B cell (primary cell): ENCODE measurements at regions of chr16 and their contacts with region 1.

Region 1: GRCh38 chr16:21708533-21709115 is 44.9 kb downstream of the OTOA start:
- DNase-seq: peak; percentile 87
- ATAC-seq: peak; percentile 47
- H3K4me3 ChIP-seq: no peak overlapping the region
- H3K4me3 Mint-ChIP-seq: no peak overlapping the region
- H3K27ac ChIP-seq: no peak overlapping the region
- H3K27ac Mint-ChIP-seq: no peak overlapping the region
- H3K4me1 ChIP-seq: peaks cover 7 to 15% of the 10 kb centered on the region in 2 donors
- H3K4me1 Mint-ChIP-seq: peaks cover 9% of the 10 kb centered on the region
- H3K27me3 ChIP-seq: peaks cover 0 to 11% (median 5%) of the 10 kb centered on the region in 4 experiments
- H3K27me3 Mint-ChIP-seq: peaks cover 10% of the 10 kb centered on the region
- CTCF ChIP-seq: peak; percentile 91

Region 2: GRCh38 chr16:21584817-21585216 is 123.8 kb before region 1 on chr16:
- CTCF ChIA-PET with region 1: interaction called, 129 read pairs
- POLR2A ChIA-PET with region 1: interaction called, 3 read pairs
- intact Hi-C with region 1: no loop called
- DNase-seq: no peak
- ATAC-seq: no peak
- H3K4me3 ChIP-seq: no peak overlapping the region
- H3K4me3 Mint-ChIP-seq: no peak overlapping the region
- H3K27ac ChIP-seq: no peak overlapping the region
- H3K27ac Mint-ChIP-seq: no peak overlapping the region
- H3K4me1 ChIP-seq: peaks cover 0 to 9% of the 10 kb centered on the region in 2 donors
- H3K4me1 Mint-ChIP-seq: peaks cover 6% of the 10 kb centered on the region
- H3K27me3 ChIP-seq: no peaks in the 10 kb centered on the region
- H3K27me3 Mint-ChIP-seq: no peaks in the 10 kb centered on the region
- CTCF ChIP-seq: no peak

Region 3: GRCh38 chr16:21599233-21600030 is 109.2 kb before region 1 on chr16 and contains the start of gene METTL9:
- CTCF ChIA-PET with region 1: interaction called, 11 read pairs
- POLR2A ChIA-PET with region 1: interaction called, 4 read pairs
- intact Hi-C with region 1: loop called (anchors 1 kb)
- DNase-seq: peak; percentile 97
- ATAC-seq: peak; percentile 89
- H3K4me3 ChIP-seq: peak within 1 kb of the TSS; percentile 70 to 95 (median 82)
- H3K4me3 Mint-ChIP-seq: peak within 1 kb of the TSS; percentile 88
- H3K27ac ChIP-seq: peak within 1 kb of the TSS; percentile 83 to 91
- H3K27ac Mint-ChIP-seq: peak within 1 kb of the TSS; percentile 94
- H3K4me1 ChIP-seq: peaks cover 13 to 17% of the 10 kb centered on the region in 2 donors
- H3K4me1 Mint-ChIP-seq: peaks cover 35% of the 10 kb centered on the region
- H3K27me3 ChIP-seq: no peaks in the 10 kb centered on the region
- H3K27me3 Mint-ChIP-seq: no peaks in the 10 kb centered on the region
- CTCF ChIP-seq: no peak
- total RNA-seq, gene METTL9: 57.3 and 57.7 TPM in 2 replicates

Region 4: DNA sequence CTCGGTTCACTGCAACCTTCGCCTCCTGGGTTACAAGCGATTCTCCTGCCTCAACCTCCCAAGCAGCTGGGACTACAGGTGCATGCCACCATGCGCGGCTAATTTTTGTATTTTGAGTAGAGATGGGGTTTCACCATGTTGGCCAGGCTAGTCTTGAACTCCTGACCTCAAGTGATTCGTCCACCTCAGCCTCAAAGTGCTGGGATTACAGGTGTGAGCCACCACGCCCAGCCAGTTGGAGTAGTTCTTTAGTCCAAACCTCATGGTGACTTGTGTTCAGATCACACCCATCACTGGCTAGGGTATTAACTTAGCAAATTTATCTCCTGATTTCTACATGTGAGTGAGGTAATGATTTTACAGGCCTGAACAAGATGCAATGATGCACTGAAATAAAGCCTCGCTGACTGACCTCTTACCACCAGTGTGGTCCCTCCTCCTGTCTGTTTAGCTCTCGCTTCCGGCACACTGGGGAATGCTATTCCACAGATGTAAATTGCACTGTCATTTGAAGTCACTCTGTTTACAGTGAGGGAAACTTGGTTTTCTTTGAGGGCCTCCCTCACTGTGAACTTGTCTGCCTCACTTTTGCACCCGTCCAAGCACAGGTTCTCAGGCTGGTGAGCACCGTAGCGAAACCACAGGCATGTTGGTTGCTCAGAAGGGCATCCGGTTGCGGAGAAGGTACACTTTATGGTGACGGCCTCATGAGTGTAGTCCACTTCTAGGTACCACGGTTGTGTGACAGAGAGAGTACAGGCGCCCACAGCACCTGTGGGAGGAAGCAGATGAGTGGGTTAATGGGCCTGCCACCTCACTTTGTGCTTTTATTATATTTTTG is 61.7 kb before region 1 on chr16:
- CTCF ChIA-PET with region 1: interaction called, 52 read pairs
- POLR2A ChIA-PET with region 1: no interaction called
- intact Hi-C with region 1: loop called (anchors 2 kb)
- DNase-seq: peak; percentile 77
- ATAC-seq: peak; percentile 86
- H3K4me3 ChIP-seq: peak overlapping the region in 2 of 5 experiments; percentile 2 to 8
- H3K4me3 Mint-ChIP-seq: peak overlapping the region; percentile 73
- H3K27ac ChIP-seq: peak overlapping the region; percentile 83 to 92
- H3K27ac Mint-ChIP-seq: peak overlapping the region; percentile 89
- H3K4me1 ChIP-seq: peaks cover 76 to 79% of the 10 kb centered on the region in 2 donors
- H3K4me1 Mint-ChIP-seq: peaks cover 69% of the 10 kb centered on the region
- H3K27me3 ChIP-seq: no peaks in the 10 kb centered on the region
- H3K27me3 Mint-ChIP-seq: no peaks in the 10 kb centered on the region
- CTCF ChIP-seq: no peak

Region 5: GRCh38 chr16:21673469-21673868 is 35.2 kb before region 1 on chr16:
- CTCF ChIA-PET with region 1: no interaction called
- POLR2A ChIA-PET with region 1: no interaction called
- intact Hi-C with region 1: no loop called
- DNase-seq: no peak
- ATAC-seq: no peak
- H3K4me3 ChIP-seq: no peak overlapping the region
- H3K4me3 Mint-ChIP-seq: no peak overlapping the region
- H3K27ac ChIP-seq: no peak overlapping the region
- H3K27ac Mint-ChIP-seq: no peak overlapping the region
- H3K4me1 ChIP-seq: no peaks in the 10 kb centered on the region
- H3K4me1 Mint-ChIP-seq: no peaks in the 10 kb centered on the region
- H3K27me3 ChIP-seq: no peaks in the 10 kb centered on the region
- H3K27me3 Mint-ChIP-seq: peaks cover 3% of the 10 kb centered on the region
- CTCF ChIP-seq: no peak

Region 6: DNA sequence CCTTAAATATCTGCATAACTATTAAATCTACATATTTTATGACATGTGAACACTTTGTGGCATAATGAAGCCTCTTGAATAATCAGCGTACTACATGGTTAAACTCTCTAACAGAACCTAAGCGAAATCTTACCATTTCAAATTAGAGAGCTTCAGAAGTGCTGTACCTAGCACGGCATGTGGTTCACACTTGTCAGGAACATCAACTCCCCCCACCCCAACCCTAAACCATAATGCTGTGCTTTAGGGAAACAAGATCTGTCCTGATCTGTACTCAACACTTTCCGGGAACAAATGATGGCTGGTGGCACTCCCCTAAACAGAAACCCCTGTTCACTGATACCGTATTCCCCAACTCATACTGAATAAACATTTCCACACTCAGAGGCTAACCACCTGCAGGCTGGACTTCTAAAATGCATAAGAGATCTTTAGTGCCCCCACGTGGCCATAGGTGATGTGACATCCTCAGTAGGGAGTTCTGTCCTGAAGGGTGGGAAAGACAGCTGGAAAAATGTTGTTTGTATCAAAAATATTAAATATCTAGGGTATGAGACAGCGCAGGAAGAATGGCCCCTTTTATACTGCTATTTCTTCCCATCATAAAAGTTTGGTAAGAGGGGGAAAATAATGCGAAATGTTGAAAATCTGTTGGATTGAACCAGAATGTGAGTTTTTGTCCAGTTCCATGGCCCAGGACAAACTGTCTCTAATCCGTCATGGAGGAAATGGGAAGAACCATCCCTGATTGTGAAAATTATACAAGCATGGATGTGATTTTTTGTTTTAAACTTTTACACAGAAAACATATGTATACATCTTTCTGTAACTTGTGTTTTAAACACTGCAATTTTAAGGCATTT is 1352.1 kb after region 1 on chr16:
- CTCF ChIA-PET with region 1: interaction called, 4 read pairs
- POLR2A ChIA-PET with region 1: no interaction called
- intact Hi-C with region 1: loop called (anchors 1 kb)
- DNase-seq: peak; percentile 76
- ATAC-seq: peak; percentile 78
- H3K4me3 ChIP-seq: no peak overlapping the region
- H3K4me3 Mint-ChIP-seq: no peak overlapping the region
- H3K27ac ChIP-seq: no peak overlapping the region
- H3K27ac Mint-ChIP-seq: no peak overlapping the region
- H3K4me1 ChIP-seq: peaks cover 5% of the 10 kb centered on the region in 2 donors
- H3K4me1 Mint-ChIP-seq: peaks cover 7% of the 10 kb centered on the region
- H3K27me3 ChIP-seq: peaks cover 0 to under 1% (median 0%) of the 10 kb centered on the region in 4 experiments
- H3K27me3 Mint-ChIP-seq: peaks cover 11% of the 10 kb centered on the region
- CTCF ChIP-seq: peak; percentile 97